ENCODE measurements at regions of chr16 and their contacts with region 1.

Region 1: GRCh38 chr16:1363501-1364041 is 11.8 kb downstream of the GNPTG start:
- DNase-seq: peak; percentile 52 to 77 (median 58)
- H3K4me3 ChIP-seq: no peak overlapping the region
- H3K4me3 Mint-ChIP-seq: no peak overlapping the region
- H3K27ac ChIP-seq: no peak overlapping the region
- H3K27ac Mint-ChIP-seq: peak overlapping the region in 6 of 8 donors; percentile 33 to 83 (median 81)
- H3K4me1 ChIP-seq: no peaks in the 10 kb centered on the region
- H3K4me1 Mint-ChIP-seq: peaks cover 0 to 8% (median 3%) of the 10 kb centered on the region in 3 donors
- H3K27me3 ChIP-seq: no peaks in the 10 kb centered on the region
- H3K27me3 Mint-ChIP-seq: no peaks in the 10 kb centered on the region

Region 2: GRCh38 chr16:1351582-1352362 is 11.8 kb before region 1 on chr16 and contains the starts of genes GNPTG and TSR3:
- CTCF ChIA-PET with region 1: interaction called, 11 read pairs
- POLR2A ChIA-PET with region 1: no interaction called
- DNase-seq: peak; percentile 77 to 91 (median 86)
- H3K4me3 ChIP-seq: peak within 1 kb of the TSS; percentile 78
- H3K4me3 Mint-ChIP-seq: peak within 1 kb of the TSS; percentile 83 to 96 (median 86)
- H3K27ac ChIP-seq: peak within 1 kb of the TSS; percentile 75
- H3K27ac Mint-ChIP-seq: peak within 1 kb of the TSS; percentile 40 to 97 (median 80)
- H3K4me1 ChIP-seq: peaks cover 26% of the 10 kb centered on the region
- H3K4me1 Mint-ChIP-seq: peaks cover 28 to 56% (median 31%) of the 10 kb centered on the region in 3 donors
- H3K27me3 ChIP-seq: no peaks in the 10 kb centered on the region
- H3K27me3 Mint-ChIP-seq: peaks cover 0 to 6% of the 10 kb centered on the region in 2 donors
- total RNA-seq, gene GNPTG: 32.3 to 34.4 TPM
- total RNA-seq, gene TSR3: 91.8 to 102 TPM

Region 3: DNA sequence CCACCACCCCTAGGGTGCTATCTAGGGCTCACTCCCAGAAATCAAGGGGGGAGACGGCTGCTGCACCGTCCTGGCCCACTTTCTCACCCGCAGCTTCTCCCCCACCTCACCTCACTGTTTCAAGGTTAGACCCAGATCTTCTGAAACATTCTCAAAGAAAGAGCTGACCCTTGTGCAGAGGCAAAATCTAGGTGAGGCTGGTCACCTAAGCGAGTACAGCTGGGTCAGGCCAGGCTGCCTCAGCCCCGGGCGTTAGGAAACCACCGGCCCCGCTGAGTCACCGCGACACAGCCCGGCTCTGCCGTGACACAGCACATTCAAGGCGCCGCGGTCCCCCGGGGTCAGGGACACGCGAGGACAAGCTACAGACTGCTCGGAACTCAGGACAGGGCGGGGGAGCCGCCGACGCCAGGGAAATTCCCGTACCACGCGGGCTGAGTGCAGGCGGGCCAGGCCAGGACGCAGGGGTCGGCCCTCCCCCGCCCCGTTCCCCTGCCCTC is 15.3 kb after region 1 on chr16:
- CTCF ChIA-PET with region 1: interaction called, 18 read pairs
- POLR2A ChIA-PET with region 1: no interaction called
- DNase-seq: peak in 4 of 5 donors; percentile 49 to 75 (median 63)
- H3K4me3 ChIP-seq: no peak overlapping the region
- H3K4me3 Mint-ChIP-seq: peak overlapping the region; percentile 19 to 78 (median 63)
- H3K27ac ChIP-seq: peak overlapping the region; percentile 59
- H3K27ac Mint-ChIP-seq: peak overlapping the region in 7 of 8 donors; percentile 44 to 94 (median 67)
- H3K4me1 ChIP-seq: peaks cover 9% of the 10 kb centered on the region
- H3K4me1 Mint-ChIP-seq: peaks cover 11 to 23% (median 14%) of the 10 kb centered on the region in 3 donors
- H3K27me3 ChIP-seq: no peaks in the 10 kb centered on the region
- H3K27me3 Mint-ChIP-seq: peaks cover 0 to 1% of the 10 kb centered on the region in 2 donors

Region 4: GRCh38 chr16:1398826-1399601 is 35.4 kb after region 1 on chr16:
- CTCF ChIA-PET with region 1: no interaction called
- POLR2A ChIA-PET with region 1: no interaction called
- DNase-seq: no peak
- H3K4me3 ChIP-seq: no peak overlapping the region
- H3K4me3 Mint-ChIP-seq: no peak overlapping the region
- H3K27ac ChIP-seq: no peak overlapping the region
- H3K27ac Mint-ChIP-seq: no peak overlapping the region
- H3K4me1 ChIP-seq: no peaks in the 10 kb centered on the region
- H3K4me1 Mint-ChIP-seq: peaks cover 3 to 10% (median 4%) of the 10 kb centered on the region in 3 donors
- H3K27me3 ChIP-seq: no peaks in the 10 kb centered on the region
- H3K27me3 Mint-ChIP-seq: peaks cover 0 to 4% of the 10 kb centered on the region in 2 donors

Region 5: GRCh38 chr16:1533443-1533951 is 169.9 kb after region 1 on chr16 and contains the start of gene TMEM204:
- CTCF ChIA-PET with region 1: no interaction called
- POLR2A ChIA-PET with region 1: no interaction called
- DNase-seq: peak in 2 of 5 donors; percentile 67 to 72
- H3K4me3 ChIP-seq: peak within 1 kb of the TSS; percentile 77
- H3K4me3 Mint-ChIP-seq: peak within 1 kb of the TSS; percentile 92 to 100 (median 98)
- H3K27ac ChIP-seq: peak within 1 kb of the TSS; percentile 38
- H3K27ac Mint-ChIP-seq: peak within 1 kb of the TSS; percentile 84 to 99 (median 94)
- H3K4me1 ChIP-seq: peaks cover 43% of the 10 kb centered on the region
- H3K4me1 Mint-ChIP-seq: peaks cover 33 to 52% (median 35%) of the 10 kb centered on the region in 3 donors
- H3K27me3 ChIP-seq: no peaks in the 10 kb centered on the region
- H3K27me3 Mint-ChIP-seq: peaks cover 0 to 2% of the 10 kb centered on the region in 2 donors
- total RNA-seq, gene TMEM204: 27.1 to 30.9 TPM